ENCODE measurements at regions of chr6 and their contacts with region 1.

Region 1: GRCh38 chr6:49625140-49625539 is 11.5 kb downstream of the RHAG start:
- DNase-seq: no peak
- H3K4me3 ChIP-seq: no peak overlapping the region
- H3K27ac ChIP-seq: no peak overlapping the region
- H3K4me1 ChIP-seq: no peaks in the 10 kb centered on the region
- H3K27me3 ChIP-seq: no peaks in the 10 kb centered on the region; the same call in 1 of the 2 replicates

Region 2: GRCh38 chr6:49321561-49322072 is 303.5 kb before region 1 on chr6:
- in situ Hi-C with region 1: no loop called
- DNase-seq: no peak
- H3K4me3 ChIP-seq: no peak overlapping the region
- H3K27ac ChIP-seq: no peak overlapping the region
- H3K4me1 ChIP-seq: peaks cover 11% of the 10 kb centered on the region
- H3K27me3 ChIP-seq: no peaks in the 10 kb centered on the region

Region 3: GRCh38 chr6:49849213-49849907 is 224.2 kb after region 1 on chr6:
- in situ Hi-C with region 1: loop called (anchors 10 kb)
- DNase-seq: peak; percentile 70
- H3K4me3 ChIP-seq: no peak overlapping the region
- H3K27ac ChIP-seq: no peak overlapping the region
- H3K4me1 ChIP-seq: no peaks in the 10 kb centered on the region
- H3K27me3 ChIP-seq: no peaks in the 10 kb centered on the region

Measured in GM23248 (cell line).